Activated CD4-positive, alpha-beta T cell treated with anti-CD3 and anti-CD28 coated beads for 36 hours (primary cell): ENCODE measurements at regions of chr2 and their contacts with region 1.

Region 1: DNA sequence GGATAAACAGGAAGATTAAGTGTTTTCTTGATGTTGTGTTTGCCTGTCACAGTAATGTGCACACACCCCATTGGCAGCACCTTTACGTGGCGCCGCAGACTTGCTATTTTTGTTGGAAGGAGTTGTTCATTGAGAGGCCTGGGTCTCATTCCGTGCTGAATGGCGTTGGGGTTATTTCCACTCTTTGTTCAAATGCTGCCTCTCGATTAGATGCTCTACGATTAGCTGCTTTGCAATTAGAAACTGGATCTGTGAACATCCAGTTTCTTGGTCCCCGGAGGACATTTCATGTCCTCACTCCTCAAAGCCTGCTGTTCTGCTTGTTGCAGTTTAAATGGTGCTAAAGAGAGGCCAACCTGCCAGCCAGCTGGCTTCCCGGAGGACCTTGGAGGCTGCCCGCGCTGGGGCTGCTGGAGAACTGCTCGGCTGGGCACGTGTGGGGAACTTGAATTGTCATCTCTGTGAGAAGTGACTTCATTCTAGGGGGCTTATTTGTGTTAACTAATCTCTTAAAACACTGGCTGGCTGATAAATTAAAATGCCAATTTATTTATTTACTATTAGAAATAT is 117.4 kb upstream of the NABP1 start:
- DNase-seq: no peak
- ATAC-seq: no peak
- H3K4me3 Mint-ChIP-seq: no peak overlapping the region
- H3K27ac Mint-ChIP-seq: no peak overlapping the region
- H3K4me1 Mint-ChIP-seq: no peaks in the 10 kb centered on the region
- H3K27me3 Mint-ChIP-seq: peaks cover 22% of the 10 kb centered on the region

Region 2: DNA sequence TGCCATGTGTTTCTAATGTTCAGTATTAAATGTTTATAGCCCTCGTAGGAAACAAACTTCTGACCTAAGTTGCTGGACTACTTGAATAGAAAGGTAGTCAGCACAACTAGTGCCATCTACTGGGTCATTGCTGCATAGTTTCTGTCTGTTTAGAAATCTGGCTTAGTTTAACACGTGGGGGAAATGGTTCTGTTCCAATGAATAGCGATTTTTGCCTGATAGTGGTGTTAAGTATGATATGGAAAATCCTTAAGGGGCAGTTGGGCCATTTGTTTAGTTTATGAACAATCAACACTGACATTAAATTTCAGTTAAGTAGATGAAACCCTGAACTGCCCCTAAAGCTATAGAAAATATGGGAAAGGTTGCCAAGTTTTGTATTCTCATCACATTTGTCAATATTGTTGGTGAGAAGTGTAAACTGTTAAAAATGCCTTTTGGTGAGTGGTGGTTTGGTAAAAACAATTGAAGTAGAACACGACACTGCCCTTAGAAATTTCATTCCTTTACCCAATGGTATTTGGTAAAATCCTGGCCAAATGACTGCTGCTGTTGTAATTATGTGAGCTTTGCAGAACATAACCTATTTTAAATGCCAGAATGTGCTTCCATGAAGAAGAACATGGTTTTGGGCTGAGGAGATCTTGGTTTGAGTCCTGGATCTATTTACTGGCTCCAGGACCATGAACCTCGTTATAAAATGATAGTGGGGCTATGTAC is 130.7 kb after region 1 on chr2:
- CTCF ChIA-PET with region 1: interaction called, 41 read pairs
- POLR2A ChIA-PET with region 1: no interaction called
- intact Hi-C with region 1: loop called in 1 of 2 experiments (anchors 1 kb)
- DNase-seq: peak; percentile 58
- ATAC-seq: peak; percentile 43
- H3K4me3 Mint-ChIP-seq: peak overlapping the region; percentile 25
- H3K27ac Mint-ChIP-seq: peak overlapping the region; percentile 77
- H3K4me1 Mint-ChIP-seq: peaks cover 56% of the 10 kb centered on the region
- H3K27me3 Mint-ChIP-seq: no peaks in the 10 kb centered on the region